GM12878 (cell line): ENCODE measurements at regions of chr2 and their contacts with region 1.

Region 1: DNA sequence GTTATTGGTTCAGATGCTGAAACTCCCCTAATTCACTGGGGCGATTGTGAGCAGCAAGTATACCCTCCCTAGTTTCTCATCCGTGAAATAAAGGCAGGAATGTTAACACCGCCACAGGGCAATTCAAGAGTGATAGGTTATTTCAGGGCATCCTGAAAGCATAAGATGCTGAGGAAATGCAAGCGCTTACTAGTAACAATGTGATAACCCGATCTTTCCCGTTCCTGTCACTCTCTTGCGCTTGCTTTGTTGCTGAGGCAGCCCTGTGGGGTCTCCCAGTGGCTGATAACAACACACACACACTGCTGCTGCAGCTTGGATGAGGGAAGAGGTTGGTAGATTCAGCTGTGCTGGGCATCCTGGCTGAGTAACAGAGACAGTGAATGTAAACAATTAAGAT is 259.3 kb downstream of the AGPS start:
- DNase-seq: no peak
- ATAC-seq: no peak
- H3K4me3 ChIP-seq: no peak overlapping the region
- H3K27ac ChIP-seq: no peak overlapping the region
- H3K4me1 ChIP-seq: no peaks in the 10 kb centered on the region
- H3K27me3 ChIP-seq: peaks cover 2 to 6% of the 10 kb centered on the region in 2 experiments; a peak in 3 of 4 replicates
- CTCF ChIP-seq: no peak
- EP300 ChIP-seq: no peak
- POLR2A ChIP-seq: no peak
- RAD21 ChIP-seq: no peak

Region 2: DNA sequence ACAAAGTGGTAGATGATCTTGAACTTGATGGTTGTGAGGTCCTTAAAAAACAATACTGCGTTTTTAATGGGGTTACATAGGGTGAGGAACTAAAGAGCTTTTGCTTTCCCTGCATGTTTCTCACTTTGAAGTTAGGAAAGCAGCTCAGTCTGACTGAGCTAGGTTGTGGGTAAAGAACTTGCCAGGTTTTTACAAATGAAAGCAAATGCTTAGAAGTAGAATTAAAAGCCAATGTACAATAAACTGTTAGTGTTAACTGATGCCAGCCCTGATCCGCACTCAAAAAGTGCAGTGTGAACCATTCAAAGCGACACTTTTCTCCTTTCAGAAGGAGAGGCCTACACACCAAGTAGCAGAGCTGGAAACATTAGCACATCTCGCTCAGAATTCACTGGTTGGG is 11.1 kb after region 1 on chr2:
- CTCF ChIA-PET with region 1: interaction called, 5 read pairs
- POLR2A ChIA-PET with region 1: no interaction called
- RAD21 ChIA-PET with region 1: no interaction called
- SMC1A ChIA-PET with region 1: interaction called, 10 read pairs
- in situ Hi-C with region 1: no loop called
- intact Hi-C with region 1: no loop called
- DNase-seq: no peak
- ATAC-seq: no peak
- H3K4me3 ChIP-seq: no peak overlapping the region
- H3K27ac ChIP-seq: no peak overlapping the region
- H3K4me1 ChIP-seq: no peaks in the 10 kb centered on the region
- H3K27me3 ChIP-seq: no peaks in the 10 kb centered on the region
- CTCF ChIP-seq: no peak
- EP300 ChIP-seq: no peak
- POLR2A ChIP-seq: no peak
- RAD21 ChIP-seq: no peak

Region 3: GRCh38 chr2:177682836-177683660 is 31.2 kb after region 1 on chr2:
- CTCF ChIA-PET with region 1: no interaction called
- POLR2A ChIA-PET with region 1: no interaction called
- RAD21 ChIA-PET with region 1: no interaction called
- SMC1A ChIA-PET with region 1: no interaction called
- in situ Hi-C with region 1: no loop called
- intact Hi-C with region 1: no loop called
- DNase-seq: no peak
- ATAC-seq: no peak
- H3K4me3 ChIP-seq: no peak overlapping the region
- H3K27ac ChIP-seq: no peak overlapping the region
- H3K4me1 ChIP-seq: no peaks in the 10 kb centered on the region
- H3K27me3 ChIP-seq: no peaks in the 10 kb centered on the region
- CTCF ChIP-seq: no peak
- EP300 ChIP-seq: no peak
- POLR2A ChIP-seq: no peak
- RAD21 ChIP-seq: no peak